Activated CD8-positive, alpha-beta T cell treated with anti-CD3 and anti-CD28 coated beads, Interleukin-2, amount 10 ng/mL, durations not matched to agents 7 days and 5 days (primary cell): ENCODE measurements at regions of chr6 and their contacts with region 1.

Region 1: DNA sequence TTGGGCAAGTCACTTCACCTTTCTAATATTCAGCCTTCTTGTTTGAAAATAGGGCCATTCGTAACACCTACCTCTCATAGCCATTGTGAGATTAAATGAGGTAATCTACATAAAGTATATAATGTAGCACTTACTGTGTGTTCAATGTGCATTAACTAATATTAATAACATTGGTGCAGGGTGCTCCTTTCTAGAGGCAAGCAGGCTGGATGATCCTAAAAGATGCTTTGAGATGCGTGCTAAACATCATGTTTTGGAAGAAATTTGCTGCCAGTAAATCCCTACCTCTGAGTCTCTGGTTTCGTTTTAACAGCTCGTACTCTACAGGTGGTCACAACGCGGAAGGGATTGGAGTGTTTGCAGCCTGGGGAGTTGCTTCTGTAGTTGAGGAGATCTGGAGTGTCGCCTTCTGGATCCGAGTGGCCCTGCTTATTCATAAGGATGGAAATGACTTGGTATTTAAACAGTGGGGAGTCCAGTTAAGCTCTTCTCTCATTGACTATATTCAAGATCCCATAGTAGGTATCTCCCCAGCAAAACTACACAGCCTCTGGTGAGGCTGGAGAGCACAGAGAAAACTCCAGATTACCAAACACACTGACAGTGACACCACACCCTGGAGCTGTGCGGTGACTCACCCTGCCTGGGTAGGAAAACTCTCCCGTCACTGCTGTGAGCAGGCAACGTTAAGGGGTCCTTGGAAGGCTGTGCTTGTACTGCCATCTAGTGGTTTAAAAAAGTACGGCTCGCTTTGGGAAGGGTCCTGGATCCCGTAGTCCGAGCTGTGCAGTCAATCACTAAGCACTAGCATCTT is 107.9 kb downstream of the MAP3K7 start:
- DNase-seq: peak; percentile 86
- ATAC-seq: peak; percentile 94
- H3K4me3 Mint-ChIP-seq: no peak overlapping the region
- H3K27ac Mint-ChIP-seq: peak overlapping the region; percentile 15
- H3K4me1 Mint-ChIP-seq: peaks cover 57% of the 10 kb centered on the region
- H3K27me3 Mint-ChIP-seq: no peaks in the 10 kb centered on the region

Region 2: GRCh38 chr6:90121982-90122381 is 357.0 kb before region 1 on chr6:
- CTCF ChIA-PET with region 1: interaction called, 15 read pairs
- POLR2A ChIA-PET with region 1: no interaction called
- DNase-seq: no peak
- ATAC-seq: no peak
- H3K4me3 Mint-ChIP-seq: no peak overlapping the region
- H3K27ac Mint-ChIP-seq: peak overlapping the region; percentile 70
- H3K4me1 Mint-ChIP-seq: peaks cover 69% of the 10 kb centered on the region
- H3K27me3 Mint-ChIP-seq: no peaks in the 10 kb centered on the region

Region 3: DNA sequence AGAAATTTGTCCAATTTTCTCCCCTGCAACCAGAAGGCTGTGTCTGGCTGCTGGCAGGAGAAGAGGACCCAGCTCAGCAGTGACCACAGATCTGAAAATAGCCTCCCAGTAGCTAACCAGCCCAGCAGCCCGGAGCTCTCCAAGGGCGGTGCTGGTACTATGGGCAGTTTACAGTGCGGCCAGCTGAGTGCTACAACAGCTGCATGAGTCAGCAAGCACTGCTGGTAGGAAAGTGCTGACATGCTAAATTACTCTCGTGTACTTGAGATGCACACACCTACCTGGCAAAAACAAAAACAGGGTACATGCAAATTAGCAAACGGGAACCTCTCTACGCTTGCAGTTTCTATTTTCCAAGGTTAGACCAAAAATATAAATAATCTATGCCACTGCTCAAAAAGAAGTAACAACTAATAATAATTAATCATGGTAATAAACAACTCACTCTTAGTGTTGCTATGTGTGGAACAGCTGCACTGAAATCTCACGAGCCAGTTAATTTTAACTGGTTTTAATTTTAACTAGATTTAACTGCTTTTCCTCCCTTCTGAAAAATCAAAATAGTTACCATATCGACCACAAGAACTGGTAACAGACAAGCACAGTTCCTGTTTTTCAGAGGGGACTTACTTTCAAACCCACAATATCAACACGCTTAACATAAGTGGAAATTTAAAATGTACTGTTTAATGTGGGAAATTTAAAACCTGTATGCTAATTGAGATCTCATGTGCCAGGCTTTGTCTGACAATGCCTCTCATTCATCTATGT is 193.2 kb before region 1 on chr6:
- CTCF ChIA-PET with region 1: interaction called, 253 read pairs
- POLR2A ChIA-PET with region 1: interaction called, 30 read pairs
- DNase-seq: peak; percentile 73
- ATAC-seq: peak; percentile 60
- H3K4me3 Mint-ChIP-seq: peak overlapping the region; percentile 75
- H3K27ac Mint-ChIP-seq: peak overlapping the region; percentile 78
- H3K4me1 Mint-ChIP-seq: peaks cover 89% of the 10 kb centered on the region
- H3K27me3 Mint-ChIP-seq: no peaks in the 10 kb centered on the region

Region 4: DNA sequence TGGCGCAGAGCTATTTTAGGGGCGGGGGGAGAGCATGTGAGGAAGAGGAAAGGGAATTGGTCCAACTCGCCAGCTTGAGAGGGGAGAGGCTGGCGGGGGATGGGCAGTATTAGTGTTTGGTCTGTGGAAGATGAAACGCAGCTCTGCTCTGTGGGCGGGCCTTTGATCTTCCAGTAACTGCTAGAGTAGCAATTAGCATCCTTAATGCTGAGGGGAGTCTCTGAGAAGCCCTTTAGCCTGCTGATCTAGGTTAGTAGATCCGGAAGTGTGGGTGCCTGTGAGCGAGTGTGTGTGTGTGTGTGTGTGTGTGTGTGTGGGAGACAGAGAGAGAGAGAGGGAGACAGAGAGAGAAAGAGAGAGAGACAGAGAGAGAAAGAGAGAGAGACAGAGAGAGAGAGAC is 65.1 kb before region 1 on chr6:
- CTCF ChIA-PET with region 1: interaction called, 123 read pairs
- POLR2A ChIA-PET with region 1: interaction called, 18 read pairs
- DNase-seq: peak; percentile 87
- ATAC-seq: peak; percentile 92
- H3K4me3 Mint-ChIP-seq: peak overlapping the region; percentile 56
- H3K27ac Mint-ChIP-seq: peak overlapping the region; percentile 93
- H3K4me1 Mint-ChIP-seq: peaks cover 67% of the 10 kb centered on the region
- H3K27me3 Mint-ChIP-seq: no peaks in the 10 kb centered on the region

Region 5: GRCh38 chr6:90466154-90466940 is 12.6 kb before region 1 on chr6:
- CTCF ChIA-PET with region 1: interaction called, 148 read pairs
- POLR2A ChIA-PET with region 1: interaction called, 5 read pairs
- DNase-seq: no peak
- ATAC-seq: peak; percentile 31
- H3K4me3 Mint-ChIP-seq: peak overlapping the region; percentile 13
- H3K27ac Mint-ChIP-seq: peak overlapping the region; percentile 71
- H3K4me1 Mint-ChIP-seq: peaks cover 88% of the 10 kb centered on the region
- H3K27me3 Mint-ChIP-seq: peaks cover 3% of the 10 kb centered on the region